WTC11 (cell line): ENCODE measurements at regions of chr18 and their contacts with region 1.

Region 1: GRCh38 chr18:21704603-21705364 is at the start of gene ABHD3:
- DNase-seq: peak; percentile 93
- ATAC-seq: peak; percentile 96
- H3K4me3 Mint-ChIP-seq: peak within 1 kb of the TSS; percentile 86
- H3K27ac Mint-ChIP-seq: peak within 1 kb of the TSS; percentile 69
- H3K4me1 Mint-ChIP-seq: peaks cover 17% of the 10 kb centered on the region
- H3K27me3 Mint-ChIP-seq: peaks cover 12% of the 10 kb centered on the region
- CTCF ChIP-seq: no peak
- total RNA-seq, gene ABHD3: 11.1 to 12.1 TPM (median 11.5 TPM) in 3 replicates

Region 2: DNA sequence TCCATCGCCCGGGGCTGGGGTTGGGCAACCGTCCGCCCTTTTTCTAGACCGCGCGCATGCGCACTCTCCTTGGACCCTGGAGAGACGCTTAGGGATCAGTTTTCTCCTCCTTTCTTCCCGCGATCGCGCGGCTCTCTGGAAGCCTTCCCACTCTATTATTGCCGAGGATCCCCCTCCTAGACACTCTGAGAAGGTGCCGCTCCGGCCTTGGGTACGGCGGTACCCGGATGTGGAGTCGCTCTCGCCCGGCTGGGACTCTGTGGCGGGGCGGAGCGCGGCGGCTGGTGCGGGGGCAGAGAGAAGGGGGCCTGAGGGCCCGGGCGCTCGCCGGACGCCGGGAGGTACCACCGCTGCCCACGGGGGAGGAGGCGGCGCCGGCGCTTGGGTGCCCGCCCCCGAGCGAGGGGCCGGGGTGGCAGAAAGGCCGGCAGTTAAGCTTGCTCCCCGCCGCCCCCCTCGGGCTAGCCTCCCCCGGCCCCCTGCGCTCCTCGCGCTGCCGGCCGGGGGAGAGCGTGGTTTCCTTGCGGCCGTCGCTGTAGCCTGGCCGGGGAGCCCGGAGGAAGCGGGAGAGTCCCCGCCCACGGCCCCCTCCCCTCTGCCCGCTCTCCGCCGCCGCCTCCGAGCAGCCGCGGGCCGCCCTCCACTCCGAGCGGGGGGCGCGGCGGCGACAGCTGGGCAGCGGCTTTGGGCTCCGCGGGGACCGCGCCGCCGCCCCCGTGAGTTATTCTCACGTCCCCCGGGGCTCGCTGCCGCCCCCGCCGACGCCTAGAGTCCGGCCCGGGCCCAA is 36.1 kb after region 1 on chr18 and contains the start of gene MIB1:
- CTCF ChIA-PET with region 1: interaction called, 17 read pairs
- POLR2A ChIA-PET with region 1: interaction called, 5 read pairs
- DNase-seq: peak; percentile 59
- ATAC-seq: peak; percentile 63
- H3K4me3 Mint-ChIP-seq: peak within 1 kb of the TSS; percentile 87
- H3K27ac Mint-ChIP-seq: peak within 1 kb of the TSS; percentile 95
- H3K4me1 Mint-ChIP-seq: peaks cover 44% of the 10 kb centered on the region
- H3K27me3 Mint-ChIP-seq: peaks cover 9% of the 10 kb centered on the region
- CTCF ChIP-seq: no peak
- total RNA-seq, gene MIB1: 57.6 to 63.9 TPM (median 58.8 TPM) in 3 replicates